ENCODE measurements at regions of chr21 and their contacts with region 1.

Region 1: DNA sequence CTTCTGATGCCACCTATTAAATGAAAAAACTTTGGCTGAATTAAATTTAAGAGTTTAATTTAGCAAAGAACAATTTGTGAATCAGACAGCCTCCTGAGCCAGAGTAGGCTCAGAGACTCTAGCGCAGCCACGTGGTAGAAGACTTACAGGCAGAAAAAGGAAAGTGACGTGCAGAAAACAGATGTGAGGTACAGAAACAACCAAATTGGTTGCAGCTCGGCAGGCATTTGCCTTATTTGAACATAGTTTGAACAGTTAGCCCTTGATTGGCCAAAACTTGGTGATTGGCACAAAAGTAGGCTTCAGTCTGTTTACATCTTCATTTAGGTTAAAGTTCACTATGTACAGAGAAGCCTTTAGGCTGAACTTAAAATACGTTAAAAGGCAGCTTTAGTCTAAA is 22.9 kb downstream of the TCP10L start:
- DNase-seq: peak; percentile 57
- H3K4me3 ChIP-seq: no peak overlapping the region
- H3K27me3 ChIP-seq: no peaks in the 10 kb centered on the region
- CTCF ChIP-seq: peak; percentile 66

Region 2: GRCh38 chr21:32412162-32413014 is 150.0 kb before region 1 on chr21 and contains the start of gene EVA1C:
- CTCF ChIA-PET with region 1: interaction called, 28 read pairs
- POLR2A ChIA-PET with region 1: no interaction called
- DNase-seq: no peak
- H3K4me3 ChIP-seq: peak within 1 kb of the TSS; percentile 70
- H3K27me3 ChIP-seq: no peaks in the 10 kb centered on the region
- CTCF ChIP-seq: no peak
- polyA plus RNA-seq, gene EVA1C: 9.6 and 12.2 TPM in 2 replicates

Region 3: GRCh38 chr21:32612075-32612998 is 49.9 kb after region 1 on chr21 and contains the start of gene CFAP298:
- CTCF ChIA-PET with region 1: no interaction called
- POLR2A ChIA-PET with region 1: interaction called, 12 read pairs
- DNase-seq: peak; percentile 77
- H3K4me3 ChIP-seq: peak within 1 kb of the TSS; percentile 92
- H3K27me3 ChIP-seq: peaks cover 2% of the 10 kb centered on the region; the same call in 1 of the 2 replicates
- CTCF ChIP-seq: no peak
- polyA plus RNA-seq, gene CFAP298: 14.5 and 16.4 TPM in 2 replicates

Measured in BJ (cell line).